ENCODE measurements at regions of chr4 and their contacts with region 1.

Region 1: DNA sequence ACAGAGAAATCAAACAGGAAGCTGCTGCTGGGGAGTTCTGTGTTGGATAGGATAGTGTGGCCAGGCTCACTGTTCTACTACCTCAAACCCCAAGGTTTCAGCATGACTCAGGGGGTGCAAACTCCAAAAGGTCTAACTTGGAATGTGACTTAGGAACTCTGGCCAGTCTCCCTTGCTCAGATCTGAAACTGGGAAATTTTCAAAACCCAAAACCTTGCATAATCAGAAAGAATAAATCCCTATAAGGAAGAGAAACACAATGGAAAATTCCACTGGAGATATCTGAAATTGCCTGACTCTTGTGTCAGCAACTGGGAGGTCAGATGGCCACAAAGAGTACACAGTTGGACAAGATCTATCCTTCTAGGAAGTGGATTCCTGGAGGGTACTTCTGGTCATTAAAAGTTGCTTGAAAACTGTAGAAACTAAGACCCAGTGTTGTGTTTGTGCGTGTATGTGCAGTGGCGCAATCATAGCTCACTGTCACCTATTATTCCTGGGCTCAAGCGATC is 58.0 kb downstream of the PPEF2 start:
- DNase-seq: peak; percentile 66
- H3K4me3 Mint-ChIP-seq: no peak overlapping the region
- H3K27ac Mint-ChIP-seq: no peak overlapping the region
- H3K4me1 Mint-ChIP-seq: peaks cover 5% of the 10 kb centered on the region
- H3K27me3 Mint-ChIP-seq: no peaks in the 10 kb centered on the region
- CTCF ChIP-seq: no peak

Region 2: GRCh38 chr4:75565481-75565880 is 278.7 kb before region 1 on chr4:
- CTCF ChIA-PET with region 1: interaction called, 10 read pairs
- POLR2A ChIA-PET with region 1: no interaction called
- intact Hi-C with region 1: no loop called
- DNase-seq: no peak
- H3K4me3 Mint-ChIP-seq: no peak overlapping the region
- H3K27ac Mint-ChIP-seq: no peak overlapping the region
- H3K4me1 Mint-ChIP-seq: no peaks in the 10 kb centered on the region
- H3K27me3 Mint-ChIP-seq: no peaks in the 10 kb centered on the region
- CTCF ChIP-seq: no peak

Region 3: GRCh38 chr4:75653845-75654503 is 190.2 kb before region 1 on chr4:
- CTCF ChIA-PET with region 1: interaction called, 3 read pairs
- POLR2A ChIA-PET with region 1: no interaction called
- intact Hi-C with region 1: loop called (anchors 1 kb)
- DNase-seq: peak; percentile 45
- H3K4me3 Mint-ChIP-seq: no peak overlapping the region
- H3K27ac Mint-ChIP-seq: no peak overlapping the region
- H3K4me1 Mint-ChIP-seq: peaks cover 4% of the 10 kb centered on the region
- H3K27me3 Mint-ChIP-seq: no peaks in the 10 kb centered on the region
- CTCF ChIP-seq: peak; percentile 45

Region 4: GRCh38 chr4:75860571-75861334 is 16.5 kb after region 1 on chr4:
- CTCF ChIA-PET with region 1: interaction called, 13 read pairs
- POLR2A ChIA-PET with region 1: no interaction called
- intact Hi-C with region 1: no loop called
- DNase-seq: no peak
- H3K4me3 Mint-ChIP-seq: no peak overlapping the region
- H3K27ac Mint-ChIP-seq: no peak overlapping the region
- H3K4me1 Mint-ChIP-seq: no peaks in the 10 kb centered on the region
- H3K27me3 Mint-ChIP-seq: no peaks in the 10 kb centered on the region
- CTCF ChIP-seq: no peak

Region 5: GRCh38 chr4:75930152-75930551 is 85.9 kb after region 1 on chr4:
- CTCF ChIA-PET with region 1: no interaction called
- POLR2A ChIA-PET with region 1: no interaction called
- intact Hi-C with region 1: no loop called
- DNase-seq: no peak
- H3K4me3 Mint-ChIP-seq: no peak overlapping the region
- H3K27ac Mint-ChIP-seq: no peak overlapping the region
- H3K4me1 Mint-ChIP-seq: no peaks in the 10 kb centered on the region
- H3K27me3 Mint-ChIP-seq: no peaks in the 10 kb centered on the region
- CTCF ChIP-seq: no peak

Measured in MCF 10A (cell line).